ENCODE measurements at regions of chr3 and their contacts with region 1.

Region 1: DNA sequence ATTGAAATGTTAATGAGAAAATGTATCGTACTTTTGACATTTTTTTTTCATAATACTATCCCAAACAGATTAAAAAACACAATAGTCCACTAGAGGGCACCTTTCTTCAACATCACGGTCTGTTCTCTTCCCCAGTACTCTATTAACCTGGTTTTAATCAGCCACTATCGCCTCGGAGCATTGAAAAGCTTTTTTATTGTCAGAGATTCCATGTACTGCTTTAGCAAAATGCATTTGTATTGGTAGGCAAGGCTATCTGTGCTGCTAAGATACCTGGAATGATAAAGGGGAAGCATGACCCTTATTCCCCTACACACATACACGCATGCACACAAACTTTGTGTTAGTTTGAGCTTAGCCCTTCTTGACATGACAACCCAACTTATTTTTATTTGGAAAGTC is 160.1 kb upstream of the IL12A start:
- DNase-seq: no peak
- H3K4me3 ChIP-seq: no peak overlapping the region
- H3K27ac ChIP-seq: no peak overlapping the region
- H3K27me3 ChIP-seq: no peaks in the 10 kb centered on the region
- CTCF ChIP-seq: peak; percentile 56

Region 2: GRCh38 chr3:158152186-158152585 is 1676.4 kb before region 1 on chr3:
- CTCF ChIA-PET with region 1: no interaction called
- POLR2A ChIA-PET with region 1: no interaction called
- DNase-seq: no peak
- H3K4me3 ChIP-seq: no peak overlapping the region
- H3K27ac ChIP-seq: no peak overlapping the region
- H3K27me3 ChIP-seq: no peaks in the 10 kb centered on the region
- CTCF ChIP-seq: no peak

Region 3: DNA sequence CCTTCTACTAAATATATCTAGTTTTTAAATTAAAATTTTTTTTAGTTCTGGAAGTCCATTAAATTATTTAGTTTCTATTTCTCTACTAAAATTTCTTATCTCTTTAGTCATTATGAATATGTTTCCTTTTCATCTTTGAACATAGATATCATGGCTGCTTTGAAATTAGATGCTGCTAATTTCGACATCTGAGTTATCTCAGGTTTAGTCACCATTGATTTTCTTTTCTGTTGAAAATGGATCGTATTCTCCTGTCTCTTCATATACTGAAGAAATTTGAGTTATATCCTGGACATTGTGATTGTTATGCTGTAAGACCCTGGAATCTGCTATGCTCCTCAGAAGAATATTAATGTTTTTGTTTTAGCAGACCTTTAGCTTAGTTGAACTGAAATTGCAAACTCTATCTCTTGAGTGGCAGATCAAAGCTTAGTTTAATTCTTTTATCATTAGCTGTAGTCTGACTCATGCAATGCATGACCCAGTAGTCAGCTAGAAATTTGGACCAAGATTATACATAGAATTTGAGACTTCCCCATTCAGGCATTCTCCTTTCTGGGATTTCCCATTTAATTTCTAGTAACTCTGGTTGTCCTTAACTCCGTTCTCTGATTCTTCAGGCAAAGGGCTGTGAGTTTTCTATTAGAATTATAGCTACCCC is 279.7 kb before region 1 on chr3:
- CTCF ChIA-PET with region 1: no interaction called
- POLR2A ChIA-PET with region 1: no interaction called
- DNase-seq: peak; percentile 36
- H3K4me3 ChIP-seq: no peak overlapping the region
- H3K27ac ChIP-seq: no peak overlapping the region
- H3K27me3 ChIP-seq: no peaks in the 10 kb centered on the region
- CTCF ChIP-seq: no peak

Region 4: DNA sequence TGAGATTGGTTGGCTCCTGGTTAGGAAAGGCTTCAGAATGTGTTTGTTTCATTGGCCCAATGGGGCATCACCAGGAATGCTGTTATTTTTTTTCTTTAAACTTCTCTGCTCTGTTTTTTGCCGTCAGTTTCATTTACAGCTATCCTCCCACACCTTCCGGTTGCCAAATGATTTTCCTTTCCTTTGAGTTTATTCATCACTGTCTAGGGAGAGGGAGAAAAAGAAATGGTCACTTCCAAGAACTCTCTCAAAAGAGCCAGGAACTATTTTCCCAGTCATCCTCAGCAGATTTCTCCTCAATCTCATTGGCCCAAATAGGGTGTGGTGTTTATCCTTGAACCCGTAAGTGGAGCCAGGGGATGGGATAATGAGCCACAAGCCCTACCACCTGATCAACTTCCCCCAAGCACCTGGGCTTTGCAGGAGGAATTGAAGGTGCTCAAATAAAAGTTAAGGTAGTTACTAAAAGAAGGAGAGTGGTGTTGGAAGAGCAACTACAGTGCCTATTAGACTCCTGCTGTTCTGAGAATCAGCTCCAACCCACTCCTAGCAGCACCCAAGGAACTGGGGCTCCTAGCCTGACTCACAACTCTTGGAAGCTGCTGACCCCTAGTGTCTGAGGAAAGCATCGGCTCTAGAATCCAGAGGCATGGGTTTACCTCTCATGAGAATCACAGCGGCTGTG is 23.7 kb before region 1 on chr3:
- CTCF ChIA-PET with region 1: interaction called, 29 read pairs
- POLR2A ChIA-PET with region 1: no interaction called
- DNase-seq: peak; percentile 74
- H3K4me3 ChIP-seq: no peak overlapping the region
- H3K27ac ChIP-seq: no peak overlapping the region
- H3K27me3 ChIP-seq: no peaks in the 10 kb centered on the region
- CTCF ChIP-seq: peak; percentile 99

Region 5: GRCh38 chr3:159852821-159853505 is 24.4 kb after region 1 on chr3:
- CTCF ChIA-PET with region 1: interaction called, 32 read pairs
- POLR2A ChIA-PET with region 1: interaction called, 3 read pairs
- DNase-seq: no peak
- H3K4me3 ChIP-seq: peak overlapping the region; percentile 44
- H3K27ac ChIP-seq: peak overlapping the region; percentile 94
- H3K27me3 ChIP-seq: no peaks in the 10 kb centered on the region
- CTCF ChIP-seq: no peak

Region 6: DNA sequence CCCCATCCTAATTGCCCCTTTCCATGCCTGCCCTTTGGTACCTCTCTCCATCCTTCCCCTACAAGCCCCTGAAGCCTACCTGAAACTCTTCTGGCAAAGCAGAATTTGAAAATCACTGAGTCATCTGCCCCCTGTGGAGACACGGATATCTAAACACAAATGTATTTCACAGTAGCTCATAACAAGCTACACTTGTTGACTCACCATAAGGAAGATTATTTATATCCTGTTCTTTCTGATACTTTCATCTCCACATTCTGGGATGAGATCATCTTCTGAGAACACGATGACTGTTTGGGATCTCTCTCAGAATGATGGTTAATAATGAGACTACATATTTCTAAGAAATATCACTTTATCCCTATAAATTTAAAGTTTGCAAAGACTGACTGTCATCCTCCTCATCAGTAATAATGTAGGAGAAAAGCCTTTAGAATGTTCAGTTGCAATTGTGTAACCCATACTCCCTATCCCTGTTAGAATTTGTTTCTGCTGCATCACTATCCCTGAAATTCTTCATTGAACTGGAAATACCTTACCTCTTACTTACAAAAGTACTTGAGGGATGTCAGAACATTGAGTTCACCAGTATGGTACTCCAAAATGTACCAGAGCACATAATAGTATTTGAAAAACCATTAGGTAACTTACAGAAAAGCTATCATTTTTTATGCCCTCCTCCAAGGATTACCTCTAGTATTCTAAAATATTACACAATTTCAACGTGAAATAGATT is 44.0 kb after region 1 on chr3:
- CTCF ChIA-PET with region 1: interaction called, 13 read pairs
- POLR2A ChIA-PET with region 1: interaction called, 3 read pairs
- DNase-seq: peak; percentile 74
- H3K4me3 ChIP-seq: no peak overlapping the region
- H3K27ac ChIP-seq: peak overlapping the region; percentile 71
- H3K27me3 ChIP-seq: no peaks in the 10 kb centered on the region
- CTCF ChIP-seq: peak; percentile 44

Region 7: DNA sequence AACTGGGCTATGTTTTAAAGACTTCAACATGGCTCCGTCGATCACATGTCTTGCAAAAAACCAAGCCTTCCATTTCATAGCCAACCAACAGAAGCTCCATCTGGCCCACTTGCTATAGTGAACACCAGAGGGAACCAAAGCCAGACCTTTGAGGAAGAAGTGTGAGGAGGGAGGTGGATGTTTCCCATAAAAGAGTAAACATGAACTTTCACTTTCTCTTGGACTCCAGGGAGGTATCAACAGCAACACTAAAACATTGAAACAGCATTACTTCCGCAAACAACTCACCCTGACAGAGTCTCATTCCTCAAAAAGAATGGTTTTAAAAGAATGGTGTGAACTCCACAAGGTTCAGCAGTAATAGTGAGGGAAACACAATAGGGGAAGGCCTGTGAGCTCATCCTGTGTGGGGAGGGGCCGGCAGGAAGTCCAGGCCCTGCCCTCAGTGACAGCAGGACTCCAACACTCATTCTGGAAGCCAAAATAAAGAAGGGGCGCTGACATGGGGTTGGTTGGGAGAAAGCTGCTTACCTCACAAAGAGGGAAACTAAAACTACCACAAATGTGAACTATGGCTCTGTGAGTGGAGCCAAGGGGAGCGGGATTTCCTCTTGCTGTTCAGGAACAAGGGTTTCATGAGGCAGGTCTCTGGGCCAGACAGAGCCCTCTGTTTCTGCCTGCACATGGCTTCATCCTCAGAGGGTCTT is 101.0 kb after region 1 on chr3:
- CTCF ChIA-PET with region 1: interaction called, 11 read pairs
- POLR2A ChIA-PET with region 1: no interaction called
- DNase-seq: peak; percentile 58
- H3K4me3 ChIP-seq: no peak overlapping the region
- H3K27ac ChIP-seq: peak overlapping the region; percentile 92
- H3K27me3 ChIP-seq: no peaks in the 10 kb centered on the region
- CTCF ChIP-seq: peak; percentile 69

Measured in AG04450 (cell line).